Caco-2 (cell line): ENCODE measurements at regions of chr7 and their contacts with region 1.

Region 1: GRCh38 chr7:128135515-128136214 is 104.4 kb upstream of the LRRC4 start:
- DNase-seq: peak in 1 of 2 experiments; percentile 76
- H3K4me3 ChIP-seq: peak overlapping the region; percentile 52
- H3K4me3 Mint-ChIP-seq: peak overlapping the region; percentile 65
- H3K27ac Mint-ChIP-seq: peak overlapping the region; percentile 42
- H3K4me1 ChIP-seq: peaks cover 8% of the 10 kb centered on the region; the same call in 1 of the 2 replicates
- H3K4me1 Mint-ChIP-seq: peaks cover 5% of the 10 kb centered on the region
- H3K27me3 ChIP-seq: peaks cover 3% of the 10 kb centered on the region; the same call in 1 of the 2 replicates
- H3K27me3 Mint-ChIP-seq: peaks cover 33% of the 10 kb centered on the region
- CTCF ChIP-seq: peak; percentile 75 to 92

Region 2: GRCh38 chr7:128035712-128036111 is 100.0 kb before region 1 on chr7:
- CTCF ChIA-PET with region 1: no interaction called
- POLR2A ChIA-PET with region 1: no interaction called
- intact Hi-C with region 1: loop called (anchors 5 kb)
- DNase-seq: peak in 1 of 2 experiments; percentile 48
- H3K4me3 ChIP-seq: no peak overlapping the region
- H3K4me3 Mint-ChIP-seq: no peak overlapping the region
- H3K27ac Mint-ChIP-seq: no peak overlapping the region
- H3K4me1 ChIP-seq: no peaks in the 10 kb centered on the region
- H3K4me1 Mint-ChIP-seq: peaks cover 11% of the 10 kb centered on the region
- H3K27me3 ChIP-seq: no peaks in the 10 kb centered on the region
- H3K27me3 Mint-ChIP-seq: no peaks in the 10 kb centered on the region
- CTCF ChIP-seq: peak; percentile 34 to 57

Region 3: DNA sequence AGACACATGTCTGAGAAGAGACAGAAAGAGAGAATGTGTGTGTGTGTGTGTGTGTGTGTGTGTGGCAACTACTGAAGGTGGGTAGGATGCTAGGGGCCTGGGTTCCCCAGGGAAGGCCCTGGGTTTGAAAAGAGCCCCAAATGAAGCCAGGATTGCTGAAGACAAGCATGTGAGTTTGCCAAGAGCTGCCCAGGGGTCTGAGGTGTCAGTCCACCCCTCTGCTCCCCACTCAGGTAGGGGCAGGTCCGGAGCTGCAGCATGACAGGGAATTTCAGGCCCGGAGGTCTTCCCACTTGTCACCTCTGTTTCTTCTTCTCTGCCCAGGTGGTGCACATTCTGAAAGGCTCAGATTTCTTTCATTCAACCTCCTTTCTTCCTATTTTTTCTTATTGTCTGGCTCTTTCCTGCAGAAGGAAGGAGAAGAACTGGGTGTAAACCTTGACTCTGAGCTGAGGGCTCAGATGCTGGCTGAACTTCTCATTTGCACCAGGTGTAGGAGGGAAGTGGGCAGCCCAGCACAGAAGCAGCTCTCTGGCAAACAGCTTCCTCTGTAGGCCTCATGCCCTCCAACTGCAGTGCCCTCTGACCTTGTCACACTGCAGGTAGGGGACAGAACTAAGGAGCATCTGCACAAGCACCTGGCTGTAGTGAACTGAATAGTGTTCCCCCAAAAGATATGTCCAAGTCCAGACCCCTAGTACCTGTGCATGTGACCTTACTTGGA is 24.9 kb before region 1 on chr7:
- CTCF ChIA-PET with region 1: no interaction called
- POLR2A ChIA-PET with region 1: no interaction called
- intact Hi-C with region 1: no loop called
- DNase-seq: no peak
- H3K4me3 ChIP-seq: no peak overlapping the region
- H3K4me3 Mint-ChIP-seq: no peak overlapping the region
- H3K27ac Mint-ChIP-seq: no peak overlapping the region
- H3K4me1 ChIP-seq: no peaks in the 10 kb centered on the region; the same call in 1 of the 2 replicates
- H3K4me1 Mint-ChIP-seq: peaks cover 6% of the 10 kb centered on the region
- H3K27me3 ChIP-seq: no peaks in the 10 kb centered on the region; the same call in 1 of the 2 replicates
- H3K27me3 Mint-ChIP-seq: peaks cover 7% of the 10 kb centered on the region
- CTCF ChIP-seq: no peak

Region 4: DNA sequence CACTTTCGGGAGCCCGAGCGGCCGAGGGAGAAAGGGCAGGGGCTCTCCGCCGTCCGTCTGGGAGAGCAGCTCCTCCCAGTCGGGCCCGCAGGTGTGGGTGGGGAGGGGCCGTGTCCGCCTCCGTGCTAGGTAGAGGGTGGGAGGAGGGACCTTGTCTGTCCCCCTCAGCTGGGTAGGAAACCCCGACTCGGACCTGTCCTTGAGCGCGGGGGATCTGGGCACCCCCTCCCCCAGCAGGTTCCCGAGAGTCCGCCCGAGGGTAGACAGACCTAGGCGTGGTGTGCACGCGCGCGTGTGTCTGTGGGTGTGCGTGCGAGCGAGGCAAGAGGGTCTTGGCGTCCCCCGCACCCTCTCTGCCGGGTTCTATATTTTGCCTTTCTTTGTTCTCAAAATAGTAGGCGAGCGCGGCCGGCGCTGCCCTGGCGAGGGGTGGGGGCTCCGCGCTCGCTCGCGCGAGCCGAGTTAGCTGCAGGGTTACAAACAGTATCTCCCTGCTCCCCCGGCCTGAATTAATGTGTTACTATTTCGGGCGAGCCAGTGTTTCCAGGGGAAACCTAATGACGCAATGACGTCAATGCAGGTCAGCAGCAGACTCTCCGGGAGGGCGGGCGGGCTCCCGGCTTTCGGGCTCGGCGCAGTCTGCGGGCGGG is 31.5 kb after region 1 on chr7:
- CTCF ChIA-PET with region 1: interaction called, 4 read pairs
- POLR2A ChIA-PET with region 1: interaction called, 10 read pairs
- intact Hi-C with region 1: loop called (anchors 1 kb)
- DNase-seq: peak; percentile 51 to 61
- H3K4me3 ChIP-seq: peak overlapping the region; percentile 52
- H3K4me3 Mint-ChIP-seq: peak overlapping the region; percentile 73
- H3K27ac Mint-ChIP-seq: no peak overlapping the region
- H3K4me1 ChIP-seq: peaks cover 21% of the 10 kb centered on the region
- H3K4me1 Mint-ChIP-seq: no peaks in the 10 kb centered on the region
- H3K27me3 ChIP-seq: peaks cover 3% of the 10 kb centered on the region
- H3K27me3 Mint-ChIP-seq: peaks cover 23% of the 10 kb centered on the region
- CTCF ChIP-seq: no peak